A549 (cell line): ENCODE measurements at regions of chr18 and their contacts with region 1.

Region 1: GRCh38 chr18:10851824-10852319 is 297.5 kb downstream of the PIEZO2 start:
- DNase-seq: peak; percentile 16 to 31
- ATAC-seq: no peak
- H3K4me3 ChIP-seq: no peak overlapping the region
- H3K27ac ChIP-seq: no peak overlapping the region
- H3K4me1 ChIP-seq: 0 out of 3 replicates have a peak, but pooled peaks cover 6% of the 10 kb centered on the region
- CTCF ChIP-seq: peak; percentile 65
- EP300 ChIP-seq: no peak
- POLR2A ChIP-seq: no peak
- RAD21 ChIP-seq: peak; percentile 74 to 84

Region 2: GRCh38 chr18:11040823-11041656 is 189.2 kb after region 1 on chr18:
- CTCF ChIA-PET with region 1: interaction called, 10 read pairs
- POLR2A ChIA-PET with region 1: no interaction called
- DNase-seq: peak; percentile 13 to 26
- ATAC-seq: peak in 1 of 2 experiments; percentile 68; a peak in 3 of 6 replicates
- H3K4me3 ChIP-seq: no peak overlapping the region
- H3K27ac ChIP-seq: no peak overlapping the region
- H3K4me1 ChIP-seq: peaks cover 6% of the 10 kb centered on the region; the same call in 1 of the 3 replicates
- CTCF ChIP-seq: peak; percentile 62
- EP300 ChIP-seq: no peak
- POLR2A ChIP-seq: no peak
- RAD21 ChIP-seq: peak; percentile 47 to 64

Region 3: GRCh38 chr18:11154368-11154989 is 302.6 kb after region 1 on chr18:
- CTCF ChIA-PET with region 1: interaction called, 28 read pairs
- POLR2A ChIA-PET with region 1: no interaction called
- DNase-seq: peak; percentile 13 to 42
- ATAC-seq: no peak
- H3K4me3 ChIP-seq: no peak overlapping the region
- H3K27ac ChIP-seq: no peak overlapping the region
- H3K4me1 ChIP-seq: 0 out of 3 replicates have a peak, but pooled peaks cover 2% of the 10 kb centered on the region
- CTCF ChIP-seq: peak; percentile 61
- EP300 ChIP-seq: no peak
- POLR2A ChIP-seq: no peak
- RAD21 ChIP-seq: peak; percentile 67 to 79

Region 4: GRCh38 chr18:11163665-11164064 is 311.8 kb after region 1 on chr18:
- CTCF ChIA-PET with region 1: interaction called, 13 read pairs
- POLR2A ChIA-PET with region 1: no interaction called
- DNase-seq: peak; percentile 18 to 36
- ATAC-seq: peak; percentile 89
- H3K4me3 ChIP-seq: no peak overlapping the region
- H3K27ac ChIP-seq: no peak overlapping the region
- H3K4me1 ChIP-seq: no peaks in the 10 kb centered on the region
- CTCF ChIP-seq: peak; percentile 48
- EP300 ChIP-seq: no peak
- POLR2A ChIP-seq: no peak
- RAD21 ChIP-seq: peak; percentile 21 to 42; a peak in 2 of 5 replicates